ENCODE measurements at regions of chr16 and their contacts with region 1.

Region 1: GRCh38 chr16:23423496-23424049 is 29.4 kb downstream of the COG7 start:
- DNase-seq: peak; percentile 97
- H3K4me3 ChIP-seq: no peak overlapping the region
- H3K27ac ChIP-seq: peak overlapping the region; percentile 91
- H3K4me1 ChIP-seq: peaks cover 20% of the 10 kb centered on the region
- H3K27me3 ChIP-seq: no peaks in the 10 kb centered on the region
- CTCF ChIP-seq: no peak

Region 2: DNA sequence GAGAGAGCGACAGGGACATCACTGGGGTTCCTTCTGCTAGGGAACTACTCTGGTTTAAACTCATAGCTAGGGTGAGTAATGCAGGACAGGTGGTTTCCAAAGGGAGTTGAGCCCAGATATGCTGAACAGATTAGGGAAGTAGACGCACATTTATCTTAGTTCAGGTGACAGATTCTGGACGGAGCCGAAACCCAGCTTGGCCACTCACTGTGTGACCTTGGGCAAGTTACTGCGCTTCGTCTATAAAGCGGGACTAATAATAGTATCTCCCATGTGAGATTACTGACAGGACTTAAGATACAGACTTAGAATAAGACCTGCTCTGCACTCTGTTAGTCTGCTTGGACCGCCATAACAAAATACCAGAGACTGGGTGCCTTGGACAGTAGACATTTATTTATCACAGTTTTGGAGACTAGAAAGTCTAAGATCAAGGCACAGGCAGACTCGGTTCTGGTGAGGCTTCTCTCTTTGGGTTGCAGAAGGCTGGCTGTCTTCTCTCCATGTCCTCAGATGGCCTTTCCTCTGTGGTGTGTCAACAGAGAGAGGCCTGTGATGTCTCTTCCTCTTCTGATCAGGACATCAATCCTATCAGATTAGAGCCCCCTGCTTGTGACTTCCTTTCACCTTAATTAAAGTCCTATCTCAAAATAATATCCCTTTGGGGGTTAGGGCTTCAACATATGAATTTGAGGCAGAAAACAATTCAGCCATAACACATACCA is 228.9 kb before region 1 on chr16:
- CTCF ChIA-PET with region 1: no interaction called
- dilution Hi-C with region 1: loop called (anchors 5 kb)
- in situ Hi-C with region 1: no loop called
- intact Hi-C with region 1: no loop called
- DNase-seq: no peak
- H3K4me3 ChIP-seq: no peak overlapping the region
- H3K27ac ChIP-seq: no peak overlapping the region
- H3K4me1 ChIP-seq: no peaks in the 10 kb centered on the region
- H3K27me3 ChIP-seq: no peaks in the 10 kb centered on the region
- CTCF ChIP-seq: no peak

Region 3: DNA sequence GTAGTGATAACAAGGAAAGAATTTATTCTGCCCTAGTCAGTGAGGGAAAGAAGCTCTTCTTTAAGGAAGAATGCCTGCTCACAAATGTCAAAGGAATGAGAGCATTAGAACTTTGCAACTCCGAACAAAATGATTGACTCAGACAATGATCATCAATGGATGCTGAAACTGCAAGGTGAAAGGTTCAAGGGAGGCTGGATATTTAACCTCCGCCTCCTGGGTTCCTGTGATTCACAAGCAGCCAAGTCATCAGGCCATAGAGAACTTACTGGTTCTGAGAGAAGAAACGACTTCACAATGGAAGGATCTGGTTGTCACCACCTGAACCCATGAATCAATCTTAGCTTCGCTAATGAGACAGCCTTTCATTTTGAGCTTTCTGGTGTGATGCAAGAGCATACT is 137.4 kb before region 1 on chr16:
- CTCF ChIA-PET with region 1: no interaction called
- dilution Hi-C with region 1: loop called (anchors 5 kb)
- in situ Hi-C with region 1: no loop called
- intact Hi-C with region 1: loop called (anchors 2 kb)
- DNase-seq: peak; percentile 97
- H3K4me3 ChIP-seq: no peak overlapping the region
- H3K27ac ChIP-seq: peak overlapping the region; percentile 69
- H3K4me1 ChIP-seq: peaks cover 46% of the 10 kb centered on the region
- H3K27me3 ChIP-seq: no peaks in the 10 kb centered on the region
- CTCF ChIP-seq: no peak

Region 4: GRCh38 chr16:23374731-23375510 is 48.7 kb before region 1 on chr16:
- CTCF ChIA-PET with region 1: no interaction called
- dilution Hi-C with region 1: no loop called
- in situ Hi-C with region 1: no loop called
- intact Hi-C with region 1: loop called (anchors 5 kb)
- DNase-seq: peak; percentile 54
- H3K4me3 ChIP-seq: no peak overlapping the region
- H3K27ac ChIP-seq: no peak overlapping the region
- H3K4me1 ChIP-seq: no peaks in the 10 kb centered on the region
- H3K27me3 ChIP-seq: no peaks in the 10 kb centered on the region
- CTCF ChIP-seq: no peak

Region 5: DNA sequence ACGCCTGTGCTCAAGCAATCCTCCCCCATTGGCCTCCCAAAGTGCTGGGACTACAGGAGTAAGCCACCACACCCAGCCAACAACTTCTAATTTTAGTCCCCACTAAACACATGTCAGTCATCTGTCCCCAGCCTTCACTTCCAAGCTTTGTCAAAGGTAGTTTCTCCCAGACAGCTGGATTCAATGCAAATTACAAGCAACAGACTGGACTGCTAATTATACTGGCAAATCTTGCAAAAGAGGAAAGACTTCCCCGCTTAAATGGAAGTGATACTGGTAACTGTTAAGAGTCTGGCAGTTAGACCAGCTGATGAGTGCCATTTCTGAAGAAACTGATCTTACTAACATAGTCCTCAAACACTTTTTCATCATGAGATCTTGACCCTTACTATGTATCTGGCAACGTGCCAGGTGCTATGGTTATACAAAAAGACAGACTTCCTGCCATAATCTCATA is 94.9 kb after region 1 on chr16:
- CTCF ChIA-PET with region 1: no interaction called
- dilution Hi-C with region 1: loop called (anchors 5 kb)
- in situ Hi-C with region 1: no loop called
- intact Hi-C with region 1: no loop called
- DNase-seq: no peak
- H3K4me3 ChIP-seq: no peak overlapping the region
- H3K27ac ChIP-seq: no peak overlapping the region
- H3K4me1 ChIP-seq: no peaks in the 10 kb centered on the region
- H3K27me3 ChIP-seq: no peaks in the 10 kb centered on the region
- CTCF ChIP-seq: no peak

Measured in mammary epithelial cell (primary cell).